ENCODE measurements at regions of chr3 and their contacts with region 1.

Region 1: DNA sequence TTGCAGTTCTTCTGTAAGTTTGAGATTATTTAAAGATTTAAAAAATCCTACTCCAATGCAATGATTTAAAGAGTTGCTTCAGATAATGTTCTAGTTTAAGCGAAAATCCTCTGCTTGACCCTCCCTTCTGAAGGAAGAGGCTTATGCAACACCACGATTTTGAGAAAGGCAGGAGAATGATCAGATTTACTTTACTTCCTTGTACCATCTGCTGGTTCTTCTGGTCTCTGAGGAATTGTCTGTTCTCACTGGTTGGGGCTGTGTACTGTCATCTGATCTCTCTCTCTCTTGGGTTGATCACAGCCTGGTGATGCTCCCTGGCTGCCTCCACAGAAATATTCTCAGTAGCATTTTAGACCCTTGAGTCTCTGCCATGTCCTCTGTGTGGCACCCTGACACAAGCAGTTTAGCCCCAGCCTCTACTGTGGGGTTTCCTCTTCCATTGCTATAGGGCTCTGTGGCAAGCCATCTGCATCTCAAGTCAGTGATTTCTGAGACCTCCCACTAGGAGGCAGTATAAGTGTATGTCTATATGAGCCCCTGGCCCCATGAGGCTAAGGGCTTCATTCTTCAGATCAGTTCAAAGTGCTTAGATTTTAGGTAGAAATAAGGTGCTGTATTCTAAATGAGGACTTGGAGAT is 50.8 kb upstream of the PLAAT1 start:
- DNase-seq: peak; percentile 56
- H3K4me3 ChIP-seq: no peak overlapping the region
- H3K27ac ChIP-seq: no peak overlapping the region
- H3K4me1 ChIP-seq: no peaks in the 10 kb centered on the region
- H3K27me3 ChIP-seq: peaks cover 0 to 9% of the 10 kb centered on the region in 2 experiments
- CTCF ChIP-seq: peak; percentile 45 to 59
- POLR2A ChIP-seq: no peak

Region 2: GRCh38 chr3:193452338-193452737 is 262.1 kb after region 1 on chr3:
- CTCF ChIA-PET with region 1: interaction called, 3 read pairs
- POLR2A ChIA-PET with region 1: no interaction called
- dilution Hi-C with region 1: no loop called
- intact Hi-C with region 1: loop called (anchors 1 kb)
- DNase-seq: peak; percentile 4
- H3K4me3 ChIP-seq: no peak overlapping the region
- H3K27ac ChIP-seq: no peak overlapping the region
- H3K4me1 ChIP-seq: no peaks in the 10 kb centered on the region
- H3K27me3 ChIP-seq: no peaks in the 10 kb centered on the region
- CTCF ChIP-seq: peak in 1 of 2 donors; percentile 4
- POLR2A ChIP-seq: no peak